ENCODE measurements at regions of chr18 and their contacts with region 1.

Region 1: GRCh38 chr18:830315-830901 is 18.4 kb upstream of the YES1 start:
- DNase-seq: no peak
- ATAC-seq: peak in 3 of 4 donors; percentile 28 to 68 (median 34)
- H3K4me3 ChIP-seq: no peak overlapping the region
- H3K27ac ChIP-seq: no peak overlapping the region
- H3K4me1 ChIP-seq: no peaks in the 10 kb centered on the region
- H3K27me3 ChIP-seq: no peaks in the 10 kb centered on the region
- CTCF ChIP-seq: no peak

Region 2: DNA sequence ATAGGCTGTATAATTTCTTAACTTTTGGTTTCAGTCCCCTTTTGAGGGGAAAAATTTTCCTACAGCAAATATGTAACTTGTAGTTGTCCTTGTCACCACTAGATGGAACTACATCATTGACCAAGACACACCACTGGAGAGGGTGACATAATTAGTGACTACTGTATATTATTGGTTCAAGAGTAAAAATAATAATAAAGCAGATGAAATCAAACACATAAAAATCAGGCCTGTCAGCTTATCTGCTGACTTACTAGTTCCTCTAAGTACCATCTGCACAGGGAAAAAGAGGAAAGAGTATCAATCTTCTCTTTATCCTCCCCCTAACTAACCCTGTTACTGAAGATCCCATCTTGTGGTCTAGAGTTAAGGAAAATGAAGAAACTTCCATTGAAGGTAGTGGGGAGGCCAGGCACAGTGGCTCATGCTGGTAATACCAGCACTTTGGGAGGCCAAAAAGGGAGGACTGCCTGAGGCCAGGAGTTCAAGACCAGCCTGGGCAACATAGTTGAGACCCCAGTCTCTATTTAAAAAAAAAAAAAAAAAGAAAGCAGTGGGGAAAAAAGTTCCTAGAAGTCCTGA is 88.4 kb before region 1 on chr18:
- intact Hi-C with region 1: loop called in 2 of 3 experiments (anchors 5 kb)
- DNase-seq: no peak
- ATAC-seq: peak; percentile 66 to 91 (median 89)
- H3K4me3 ChIP-seq: no peak overlapping the region
- H3K27ac ChIP-seq: no peak overlapping the region
- H3K4me1 ChIP-seq: no peaks in the 10 kb centered on the region
- H3K27me3 ChIP-seq: no peaks in the 10 kb centered on the region
- CTCF ChIP-seq: peak in 3 of 4 donors; percentile 44 to 61 (median 58)

Region 3: DNA sequence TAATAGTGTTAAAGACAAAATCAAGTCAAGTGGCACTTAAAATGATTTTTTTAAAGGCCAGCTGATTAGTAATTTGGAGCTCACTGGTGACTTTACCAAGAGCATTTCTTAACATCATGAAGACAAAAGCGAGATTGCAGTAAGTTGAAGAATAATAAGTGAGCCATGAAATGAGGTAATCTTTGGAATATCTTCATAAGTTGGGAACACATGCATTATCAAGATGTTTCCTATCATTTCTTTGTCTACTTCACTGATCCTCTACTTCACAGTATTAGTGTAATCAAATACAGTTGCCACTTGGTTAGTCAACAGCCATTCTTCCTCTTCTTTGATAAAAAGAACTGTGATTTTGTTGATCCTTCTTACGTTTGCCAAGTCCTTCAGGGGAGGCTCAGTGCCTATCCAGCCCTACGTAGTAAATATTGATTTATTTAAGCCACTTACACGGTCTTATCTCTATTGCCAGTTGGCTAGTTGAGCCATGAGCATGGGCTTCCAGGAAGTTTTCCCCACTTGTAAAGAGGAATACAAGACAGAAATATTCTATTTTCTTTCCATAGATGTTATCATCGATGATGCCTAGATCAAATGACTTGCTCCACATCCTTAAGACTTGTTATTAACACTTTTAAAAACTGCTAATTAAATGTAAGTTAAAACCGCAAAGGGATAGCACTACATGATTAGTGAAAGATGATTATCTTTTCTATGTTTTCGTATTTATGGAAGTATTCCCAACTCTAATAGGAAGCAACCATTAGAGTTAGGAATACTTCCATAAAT is 64.5 kb before region 1 on chr18:
- intact Hi-C with region 1: no loop called
- DNase-seq: no peak
- ATAC-seq: peak; percentile 56 to 83 (median 72)
- H3K4me3 ChIP-seq: no peak overlapping the region
- H3K27ac ChIP-seq: no peak overlapping the region
- H3K4me1 ChIP-seq: peaks cover 0 to 9% (median 4%) of the 10 kb centered on the region in 3 donors
- H3K27me3 ChIP-seq: no peaks in the 10 kb centered on the region
- CTCF ChIP-seq: no peak